ENCODE measurements at regions of chr20 and their contacts with region 1.

Region 1: GRCh38 chr20:46438156-46438750 is 31.8 kb upstream of the ELMO2 start:
- DNase-seq: no peak
- ATAC-seq: peak; percentile 70
- H3K4me3 Mint-ChIP-seq: no peak overlapping the region
- H3K27ac Mint-ChIP-seq: no peak overlapping the region
- H3K4me1 Mint-ChIP-seq: no peaks in the 10 kb centered on the region
- H3K27me3 Mint-ChIP-seq: peaks cover 2% of the 10 kb centered on the region
- CTCF ChIP-seq: no peak

Region 2: GRCh38 chr20:46363800-46364634 is 74.2 kb before region 1 on chr20:
- CTCF ChIA-PET with region 1: interaction called, 13 read pairs
- POLR2A ChIA-PET with region 1: no interaction called
- DNase-seq: peak; percentile 87
- ATAC-seq: peak; percentile 90
- H3K4me3 Mint-ChIP-seq: peak overlapping the region; percentile 91
- H3K27ac Mint-ChIP-seq: peak overlapping the region; percentile 97
- H3K4me1 Mint-ChIP-seq: peaks cover 13% of the 10 kb centered on the region
- H3K27me3 Mint-ChIP-seq: no peaks in the 10 kb centered on the region
- CTCF ChIP-seq: no peak

Region 3: GRCh38 chr20:46400828-46401477 is 37.3 kb before region 1 on chr20:
- CTCF ChIA-PET with region 1: interaction called, 19 read pairs
- POLR2A ChIA-PET with region 1: no interaction called
- DNase-seq: no peak
- ATAC-seq: peak; percentile 77
- H3K4me3 Mint-ChIP-seq: peak overlapping the region; percentile 26; the same call in 1 of the 2 replicates
- H3K27ac Mint-ChIP-seq: peak overlapping the region; percentile 90
- H3K4me1 Mint-ChIP-seq: peaks cover 28% of the 10 kb centered on the region
- H3K27me3 Mint-ChIP-seq: no peaks in the 10 kb centered on the region
- CTCF ChIP-seq: no peak

Region 4: GRCh38 chr20:46406199-46406985 is 31.9 kb before region 1 on chr20 and contains the start of gene ELMO2:
- CTCF ChIA-PET with region 1: interaction called, 19 read pairs
- POLR2A ChIA-PET with region 1: no interaction called
- DNase-seq: peak; percentile 98
- ATAC-seq: peak; percentile 86
- H3K4me3 Mint-ChIP-seq: peak within 1 kb of the TSS; percentile 93
- H3K27ac Mint-ChIP-seq: peak within 1 kb of the TSS; percentile 83
- H3K4me1 Mint-ChIP-seq: peaks cover 33% of the 10 kb centered on the region
- H3K27me3 Mint-ChIP-seq: peaks cover 16% of the 10 kb centered on the region
- CTCF ChIP-seq: no peak
- total RNA-seq, gene ELMO2: 28.4 to 35.5 TPM (median 32.3 TPM) in 3 replicates

Region 5: DNA sequence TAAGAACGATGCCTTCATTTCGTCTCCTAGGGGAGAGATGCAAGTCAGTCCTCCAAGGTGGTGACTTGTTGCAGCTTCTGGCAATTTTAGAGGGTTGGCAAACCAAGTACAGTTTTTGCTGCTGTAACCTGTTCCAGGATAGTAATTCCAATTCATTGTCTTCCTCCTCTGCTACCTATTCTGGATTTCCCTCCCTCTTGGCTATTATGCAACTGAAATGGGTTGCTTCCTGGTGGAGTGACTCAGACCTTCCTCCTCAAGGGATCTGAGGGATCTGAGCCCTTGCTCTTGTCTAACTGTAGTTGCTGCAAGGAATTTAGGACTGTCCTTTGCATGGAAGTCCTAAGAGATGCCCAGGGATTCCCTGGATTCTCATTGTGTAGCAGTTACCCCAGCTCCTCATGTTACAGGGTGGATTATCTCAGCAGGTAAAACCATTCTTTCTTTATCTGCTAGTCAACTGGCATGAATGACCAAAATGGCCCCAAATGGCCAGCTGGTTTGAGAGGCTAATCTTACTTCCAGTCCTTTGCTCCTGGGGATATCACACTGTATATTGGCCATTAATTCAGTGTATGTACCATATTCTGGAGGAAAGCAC is 14.3 kb before region 1 on chr20:
- CTCF ChIA-PET with region 1: interaction called, 11 read pairs
- POLR2A ChIA-PET with region 1: no interaction called
- DNase-seq: no peak
- ATAC-seq: peak; percentile 59
- H3K4me3 Mint-ChIP-seq: no peak overlapping the region
- H3K27ac Mint-ChIP-seq: peak overlapping the region; percentile 54; the same call in 1 of the 2 replicates
- H3K4me1 Mint-ChIP-seq: peaks cover 16% of the 10 kb centered on the region
- H3K27me3 Mint-ChIP-seq: peaks cover 3% of the 10 kb centered on the region; the same call in 1 of the 2 replicates
- CTCF ChIP-seq: no peak